ENCODE measurements at regions of chr11 and their contacts with region 1.

Region 1: GRCh38 chr11:75270896-75271418 is 30.4 kb downstream of the TPBGL start:
- DNase-seq: peak in 4 of 10 donors; percentile 29 to 47 (median 38)
- ATAC-seq: no peak
- H3K4me3 Mint-ChIP-seq: peak overlapping the region in 2 of 10 donors; percentile 16 to 17
- H3K27ac Mint-ChIP-seq: peak overlapping the region; percentile 83 to 98 (median 92)
- H3K4me1 Mint-ChIP-seq: peaks cover 21 to 47% (median 43%) of the 10 kb centered on the region in 4 donors
- H3K27me3 Mint-ChIP-seq: no peaks in the 10 kb centered on the region

Region 2: GRCh38 chr11:75142714-75143419 is 128.1 kb before region 1 on chr11:
- POLR2A ChIA-PET with region 1: interaction called, 20 read pairs
- DNase-seq: peak in 9 of 10 donors; percentile 24 to 82 (median 44)
- ATAC-seq: peak; percentile 84 to 88
- H3K4me3 Mint-ChIP-seq: peak overlapping the region in 9 of 10 donors; percentile 47 to 82 (median 69)
- H3K27ac Mint-ChIP-seq: peak overlapping the region; percentile 17 to 93 (median 80)
- H3K4me1 Mint-ChIP-seq: peaks cover 29 to 47% (median 42%) of the 10 kb centered on the region in 4 donors
- H3K27me3 Mint-ChIP-seq: peaks cover under 1 to 5% (median 4%) of the 10 kb centered on the region in 5 donors

Region 3: GRCh38 chr11:75248690-75249268 is 22.2 kb before region 1 on chr11:
- POLR2A ChIA-PET with region 1: interaction called, 16 read pairs
- DNase-seq: peak; percentile 73 to 93 (median 84)
- ATAC-seq: peak; percentile 97 to 100
- H3K4me3 Mint-ChIP-seq: no peak overlapping the region
- H3K27ac Mint-ChIP-seq: no peak overlapping the region
- H3K4me1 Mint-ChIP-seq: peaks cover 0 to 7% (median 4%) of the 10 kb centered on the region in 4 donors
- H3K27me3 Mint-ChIP-seq: peaks cover 0 to 6% (median under 1%) of the 10 kb centered on the region in 5 donors

Region 4: GRCh38 chr11:75342903-75343870 is 72.2 kb after region 1 on chr11:
- POLR2A ChIA-PET with region 1: interaction called, 110 read pairs
- DNase-seq: no peak
- ATAC-seq: no peak
- H3K4me3 Mint-ChIP-seq: peak overlapping the region in 9 of 10 donors; percentile 1 to 93 (median 57)
- H3K27ac Mint-ChIP-seq: peak overlapping the region; percentile 66 to 98 (median 84)
- H3K4me1 Mint-ChIP-seq: peaks cover 72 to 100% (median 99%) of the 10 kb centered on the region in 4 donors
- H3K27me3 Mint-ChIP-seq: no peaks in the 10 kb centered on the region

Region 5: DNA sequence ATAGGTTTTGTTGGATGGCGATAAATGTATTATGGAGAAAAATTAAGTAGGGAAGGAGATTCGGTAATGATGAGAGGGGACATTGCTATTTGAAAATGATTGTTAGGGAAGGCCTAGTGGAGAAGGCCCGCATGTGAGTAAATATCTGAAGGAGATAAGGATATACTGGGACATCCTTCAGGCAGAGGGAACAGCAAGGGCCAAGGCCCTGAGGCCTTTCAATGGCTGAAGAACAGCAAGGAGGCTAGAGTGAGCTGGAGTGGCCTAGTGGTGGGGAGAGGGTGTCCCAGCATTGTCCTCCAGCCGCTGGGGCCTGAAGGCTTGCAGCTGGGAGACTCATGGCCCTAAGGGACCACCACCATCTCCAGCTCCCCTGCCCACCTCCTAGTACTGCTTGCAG is 103.7 kb after region 1 on chr11:
- POLR2A ChIA-PET with region 1: no interaction called
- DNase-seq: no peak
- ATAC-seq: no peak
- H3K4me3 Mint-ChIP-seq: no peak overlapping the region
- H3K27ac Mint-ChIP-seq: peak overlapping the region in 1 of 10 donors; percentile 8
- H3K4me1 Mint-ChIP-seq: peaks cover 6 to 20% (median 11%) of the 10 kb centered on the region in 4 donors
- H3K27me3 Mint-ChIP-seq: no peaks in the 10 kb centered on the region

Region 6: DNA sequence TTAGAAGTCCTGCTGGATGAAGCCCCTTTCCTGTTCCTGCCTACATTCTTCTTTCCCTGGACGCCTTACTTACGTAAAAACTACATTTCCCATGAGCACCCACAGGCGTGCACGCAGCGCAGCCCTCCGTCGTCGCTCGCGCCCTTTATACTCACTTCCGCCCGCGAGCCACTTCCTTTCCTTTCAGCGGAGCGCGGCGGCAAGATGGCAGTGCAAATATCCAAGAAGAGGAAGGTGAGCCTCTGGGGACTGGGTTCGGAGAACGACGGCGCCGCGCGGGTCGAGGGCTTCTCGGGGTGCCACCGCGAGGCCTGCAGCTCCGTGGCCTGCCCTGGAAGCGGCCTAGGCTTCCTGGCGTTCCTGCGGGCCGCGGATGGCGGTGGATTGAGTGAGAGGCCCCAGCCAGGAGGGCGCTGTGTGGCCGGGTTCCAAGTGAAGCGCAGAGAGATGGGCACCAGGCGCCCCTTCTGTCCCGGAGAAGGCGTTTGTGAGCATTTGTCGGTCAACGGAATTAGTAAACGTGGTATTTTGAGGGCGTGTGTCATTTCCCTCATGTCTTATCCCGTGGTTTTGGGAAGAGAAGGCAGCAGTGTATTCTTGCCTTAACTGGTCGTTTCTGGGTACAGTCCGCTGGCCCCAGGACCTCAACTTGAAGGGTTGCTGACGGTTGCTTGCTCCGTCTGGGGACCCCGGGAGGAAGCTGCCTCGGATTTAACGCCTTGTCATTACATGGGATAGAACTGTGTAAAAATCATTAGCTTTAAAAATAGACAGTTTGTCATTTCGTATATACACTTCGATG is 128.6 kb after region 1 on chr11 and contains the start of gene RPS3:
- POLR2A ChIA-PET with region 1: interaction called, 20 read pairs
- DNase-seq: peak; percentile 77 to 95 (median 88)
- ATAC-seq: peak; percentile 91 to 92
- H3K4me3 Mint-ChIP-seq: peak within 1 kb of the TSS; percentile 91 to 99 (median 96)
- H3K27ac Mint-ChIP-seq: peak within 1 kb of the TSS; percentile 94 to 99 (median 96)
- H3K4me1 Mint-ChIP-seq: peaks cover 38 to 55% (median 47%) of the 10 kb centered on the region in 4 donors
- H3K27me3 Mint-ChIP-seq: no peaks in the 10 kb centered on the region
- polyA plus RNA-seq, gene RPS3: 6,922 to 7,216 (median 7,023) TPM

Measured in naive thymus-derived CD8-positive, alpha-beta T cell (primary cell).